ENCODE measurements at regions of chrX and their contacts with region 1.

Region 1: GRCh38 chrX:150635952-150636351 is 57.2 kb upstream of the MTMR1 start:
- DNase-seq: peak; percentile 20
- ATAC-seq: no peak
- H3K4me3 ChIP-seq: no peak overlapping the region
- H3K27ac ChIP-seq: no peak overlapping the region
- H3K4me1 ChIP-seq: no peaks in the 10 kb centered on the region
- H3K27me3 ChIP-seq: no peaks in the 10 kb centered on the region
- CTCF ChIP-seq: no peak

Region 2: GRCh38 chrX:149504915-149505651 is 1130.9 kb before region 1 on chrX and contains the start of gene IDS:
- CTCF ChIA-PET with region 1: no interaction called
- POLR2A ChIA-PET with region 1: no interaction called
- in situ Hi-C with region 1: loop called (anchors 25 kb)
- intact Hi-C with region 1: no loop called
- DNase-seq: no peak
- ATAC-seq: peak; percentile 99
- H3K4me3 ChIP-seq: peak within 1 kb of the TSS; percentile 61 to 90
- H3K27ac ChIP-seq: peak within 1 kb of the TSS; percentile 74
- H3K4me1 ChIP-seq: peaks cover 7% of the 10 kb centered on the region; the same call in 1 of the 2 replicates
- H3K27me3 ChIP-seq: no peaks in the 10 kb centered on the region
- CTCF ChIP-seq: no peak
- total RNA-seq, gene IDS: 78.7 TPM